Tibial artery (tissue), 4 donors: ENCODE measurements at regions of chr3 and their contacts with region 1.

Region 1: DNA sequence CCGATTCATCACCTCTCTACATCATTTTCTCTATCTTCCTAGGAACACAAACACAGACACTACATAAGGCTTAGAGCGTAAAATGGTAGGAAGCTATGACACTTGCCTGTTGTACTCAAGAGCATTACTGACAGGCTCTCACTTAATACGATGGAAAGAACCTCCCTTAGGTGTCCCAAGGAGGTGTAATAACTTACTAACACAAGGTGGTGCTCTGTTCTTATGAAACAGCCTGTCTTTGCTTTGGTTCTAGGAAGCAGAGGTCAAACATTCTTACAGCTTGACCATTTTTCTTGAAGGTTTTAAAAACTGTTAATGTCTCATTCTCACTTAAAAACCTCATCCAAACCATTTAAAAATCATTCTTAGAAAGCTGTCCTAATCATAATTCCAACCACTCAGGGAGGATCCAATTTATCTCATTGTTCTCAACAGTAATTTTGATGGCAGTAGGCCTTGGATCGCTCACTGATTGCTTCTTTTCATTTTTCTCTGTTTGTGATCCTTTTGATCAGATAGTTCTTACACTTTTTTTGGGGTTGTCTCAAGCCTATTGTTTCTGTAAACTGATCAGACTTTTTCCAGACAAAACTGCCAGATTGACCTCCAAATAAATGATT is 317.8 kb upstream of the AGTR1 start:
- DNase-seq: no peak
- H3K4me3 ChIP-seq: no peak overlapping the region
- H3K27ac ChIP-seq: no peak overlapping the region
- H3K4me1 ChIP-seq: no peaks in the 10 kb centered on the region
- H3K27me3 ChIP-seq: no peaks in the 10 kb centered on the region
- CTCF ChIP-seq: peak; percentile 59 to 69

Region 2: GRCh38 chr3:147758771-147759170 is 621.1 kb before region 1 on chr3:
- intact Hi-C with region 1: no loop called
- DNase-seq: no peak
- H3K4me3 ChIP-seq: no peak overlapping the region
- H3K27ac ChIP-seq: peak overlapping the region; percentile 48 to 57
- H3K4me1 ChIP-seq: peaks cover 0 to 38% (median 3%) of the 10 kb centered on the region in 4 donors
- H3K27me3 ChIP-seq: no peaks in the 10 kb centered on the region
- CTCF ChIP-seq: no peak

Region 3: DNA sequence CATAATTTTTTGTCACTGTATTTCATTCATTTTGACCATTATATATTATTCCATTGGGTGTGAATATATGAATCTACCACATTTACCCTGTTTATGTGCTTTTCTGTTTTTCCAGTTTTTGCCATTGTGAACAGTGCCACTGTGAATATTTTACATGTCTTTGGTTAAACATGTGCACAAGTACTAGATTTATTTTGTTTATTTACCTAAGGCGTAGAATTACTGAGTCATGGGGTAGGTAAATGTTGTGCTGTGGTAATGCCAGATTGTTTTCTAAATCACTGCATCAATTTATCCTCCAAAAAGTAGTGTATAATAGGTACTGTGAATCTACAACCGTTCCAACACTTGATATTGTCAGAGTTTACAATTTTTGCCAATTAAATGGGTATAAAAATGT is 44.3 kb before region 1 on chr3:
- intact Hi-C with region 1: no loop called
- DNase-seq: no peak
- H3K4me3 ChIP-seq: no peak overlapping the region
- H3K27ac ChIP-seq: no peak overlapping the region
- H3K4me1 ChIP-seq: no peaks in the 10 kb centered on the region
- H3K27me3 ChIP-seq: no peaks in the 10 kb centered on the region
- CTCF ChIP-seq: no peak

Region 4: DNA sequence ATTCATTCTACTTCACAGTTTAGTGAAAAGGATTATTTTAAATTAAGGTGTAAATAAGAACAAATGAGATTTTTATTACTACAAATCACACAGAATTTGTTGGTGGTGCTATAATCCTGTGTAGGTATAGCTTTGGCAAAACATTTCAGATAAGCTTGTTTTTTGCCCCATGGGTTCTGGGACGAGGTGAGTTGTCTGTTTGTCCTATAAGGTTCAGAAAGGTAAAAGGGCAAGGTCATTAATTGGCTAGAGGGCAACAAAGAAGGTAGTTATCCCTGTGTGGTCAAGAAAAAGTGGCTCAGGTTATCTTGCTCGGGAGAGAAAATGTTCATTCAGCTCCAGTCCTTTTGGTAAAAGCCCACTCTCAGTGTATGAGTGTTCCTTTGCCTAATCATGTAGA is 341.0 kb after region 1 on chr3:
- intact Hi-C with region 1: loop called (anchors 2 kb)
- DNase-seq: no peak
- H3K4me3 ChIP-seq: no peak overlapping the region
- H3K27ac ChIP-seq: no peak overlapping the region
- H3K4me1 ChIP-seq: no peaks in the 10 kb centered on the region
- H3K27me3 ChIP-seq: no peaks in the 10 kb centered on the region
- CTCF ChIP-seq: no peak